Activated naive CD4-positive, alpha-beta T cell treated with anti-CD3 and anti-CD28 coated beads for 36 hours (primary cell): ENCODE measurements at regions of chr15 and their contacts with region 1.

Region 1: GRCh38 chr15:90151989-90152645 is 49.0 kb upstream of the SEMA4B start:
- DNase-seq: no peak
- H3K4me3 Mint-ChIP-seq: no peak overlapping the region
- H3K27ac Mint-ChIP-seq: no peak overlapping the region
- H3K4me1 Mint-ChIP-seq: no peaks in the 10 kb centered on the region
- H3K27me3 Mint-ChIP-seq: no peaks in the 10 kb centered on the region

Region 2: DNA sequence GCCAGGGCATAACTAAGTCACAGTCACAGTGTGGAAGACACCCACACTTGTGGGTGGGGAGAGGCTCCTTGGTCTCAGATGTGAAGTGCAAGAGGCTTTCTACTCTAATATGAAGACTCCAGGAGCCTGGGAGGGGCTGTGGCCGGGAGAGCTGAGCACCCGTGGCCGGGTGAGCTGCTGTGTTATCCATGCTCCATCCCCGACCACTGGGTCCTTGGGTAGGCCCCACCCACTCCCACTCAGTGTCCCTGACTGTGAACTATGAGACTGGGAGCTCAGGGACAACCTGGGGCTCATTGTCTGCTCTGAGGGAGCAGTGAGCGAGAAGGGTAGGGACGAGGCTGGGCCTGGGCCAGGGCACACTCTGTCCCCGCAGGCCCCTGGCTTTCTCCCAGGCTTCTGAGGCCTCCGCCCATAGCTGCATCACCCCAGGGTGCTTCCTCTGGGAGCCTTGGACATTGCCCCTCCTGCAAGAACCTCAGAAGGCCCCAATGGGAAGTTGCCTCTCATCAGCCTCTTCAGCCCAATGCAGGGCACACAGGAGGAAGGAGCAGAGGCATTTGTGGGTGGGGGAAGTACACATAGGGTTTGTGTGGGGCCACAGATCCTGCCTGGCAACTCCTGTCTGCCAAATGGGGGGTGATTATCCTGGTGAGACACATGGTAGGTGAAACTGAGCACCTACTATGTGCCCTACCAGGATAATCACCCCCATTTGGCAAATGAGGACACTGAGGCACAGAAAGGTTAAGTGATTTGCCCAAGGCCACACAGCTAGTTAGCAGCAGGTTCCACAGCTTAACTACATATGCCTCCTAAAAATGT is 339.9 kb before region 1 on chr15:
- CTCF ChIA-PET with region 1: no interaction called
- intact Hi-C with region 1: no loop called
- DNase-seq: no peak
- H3K4me3 Mint-ChIP-seq: no peak overlapping the region
- H3K27ac Mint-ChIP-seq: no peak overlapping the region
- H3K4me1 Mint-ChIP-seq: peaks cover 3% of the 10 kb centered on the region
- H3K27me3 Mint-ChIP-seq: peaks cover 33% of the 10 kb centered on the region

Region 3: DNA sequence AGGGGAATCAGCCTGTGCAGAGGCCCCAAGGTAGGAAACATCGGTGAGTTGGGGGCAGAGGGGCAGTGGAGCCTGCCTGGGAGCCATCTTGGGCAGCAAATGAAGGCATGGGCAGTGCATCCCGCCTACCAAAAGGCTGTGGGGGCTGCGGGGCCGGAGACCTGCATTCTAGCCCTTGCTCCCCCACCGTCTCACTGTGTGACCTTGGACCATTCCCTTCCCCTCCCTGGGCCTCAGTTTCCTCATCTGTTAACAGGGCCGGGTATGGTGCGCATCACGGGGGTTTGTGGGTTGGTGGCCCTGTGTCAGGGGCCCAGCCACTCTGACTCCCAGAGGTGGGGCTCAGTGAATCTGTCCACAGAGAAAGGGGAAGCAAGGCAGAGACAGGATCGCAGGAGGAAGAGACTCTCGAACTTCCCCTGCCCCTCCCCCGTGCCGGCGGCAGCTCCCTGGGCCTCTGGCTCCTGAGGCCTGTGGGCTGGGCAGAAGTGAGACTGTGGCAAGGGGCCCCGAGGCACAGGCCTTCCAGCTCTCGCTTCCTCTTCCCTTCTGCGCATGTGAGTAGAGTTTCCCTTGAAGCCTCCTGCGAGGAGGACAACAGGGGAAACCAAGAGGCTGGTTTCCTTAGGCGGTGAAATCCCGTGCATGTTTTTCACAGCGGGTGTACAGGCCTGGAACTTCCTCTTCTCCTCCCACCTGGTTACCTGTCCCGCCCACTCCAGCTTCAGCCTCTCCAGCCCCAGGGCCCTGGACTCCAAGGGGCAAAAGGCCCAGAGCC is 92.7 kb before region 1 on chr15:
- CTCF ChIA-PET with region 1: no interaction called
- intact Hi-C with region 1: no loop called
- DNase-seq: peak; percentile 94
- H3K4me3 Mint-ChIP-seq: peak overlapping the region; percentile 59
- H3K27ac Mint-ChIP-seq: peak overlapping the region; percentile 96
- H3K4me1 Mint-ChIP-seq: peaks cover 49% of the 10 kb centered on the region
- H3K27me3 Mint-ChIP-seq: no peaks in the 10 kb centered on the region

Region 4: DNA sequence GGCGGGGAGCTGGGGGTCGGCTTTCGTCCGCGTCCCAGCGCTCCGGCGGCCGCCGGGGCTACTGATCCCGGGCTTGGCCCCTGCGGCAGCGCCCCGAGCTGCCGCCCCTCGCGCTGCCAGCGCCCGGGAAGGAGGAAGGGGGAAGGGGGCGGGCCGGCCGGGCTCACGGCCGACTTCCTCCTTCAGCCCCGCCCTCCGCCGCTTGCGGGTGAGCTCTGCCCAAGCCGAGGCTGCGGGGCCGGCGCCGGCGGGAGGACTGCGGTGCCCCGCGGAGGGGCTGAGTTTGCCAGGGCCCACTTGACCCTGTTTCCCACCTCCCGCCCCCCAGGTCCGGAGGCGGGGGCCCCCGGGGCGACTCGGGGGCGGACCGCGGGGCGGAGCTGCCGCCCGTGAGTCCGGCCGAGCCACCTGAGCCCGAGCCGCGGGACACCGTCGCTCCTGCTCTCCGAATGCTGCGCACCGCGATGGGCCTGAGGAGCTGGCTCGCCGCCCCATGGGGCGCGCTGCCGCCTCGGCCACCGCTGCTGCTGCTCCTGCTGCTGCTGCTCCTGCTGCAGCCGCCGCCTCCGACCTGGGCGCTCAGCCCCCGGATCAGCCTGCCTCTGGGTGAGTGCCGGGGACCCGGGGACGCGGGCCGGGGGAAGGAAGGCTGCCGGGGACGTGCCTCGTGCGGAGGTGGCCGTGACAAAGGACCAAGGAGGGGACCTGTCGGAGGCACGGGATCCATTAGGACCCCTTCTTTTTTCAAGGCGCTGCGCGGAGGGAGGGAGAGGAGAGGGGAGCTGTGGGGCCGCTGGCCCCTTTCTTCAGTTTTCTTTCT is 49.2 kb after region 1 on chr15 and contains the start of gene SEMA4B:
- CTCF ChIA-PET with region 1: no interaction called
- intact Hi-C with region 1: no loop called
- DNase-seq: peak; percentile 72
- H3K4me3 Mint-ChIP-seq: peak within 1 kb of the TSS; percentile 77
- H3K27ac Mint-ChIP-seq: peak within 1 kb of the TSS; percentile 75
- H3K4me1 Mint-ChIP-seq: peaks cover 11% of the 10 kb centered on the region
- H3K27me3 Mint-ChIP-seq: peaks cover 2% of the 10 kb centered on the region
- total RNA-seq, gene SEMA4B: 6.8 to 8.6 TPM

Region 5: DNA sequence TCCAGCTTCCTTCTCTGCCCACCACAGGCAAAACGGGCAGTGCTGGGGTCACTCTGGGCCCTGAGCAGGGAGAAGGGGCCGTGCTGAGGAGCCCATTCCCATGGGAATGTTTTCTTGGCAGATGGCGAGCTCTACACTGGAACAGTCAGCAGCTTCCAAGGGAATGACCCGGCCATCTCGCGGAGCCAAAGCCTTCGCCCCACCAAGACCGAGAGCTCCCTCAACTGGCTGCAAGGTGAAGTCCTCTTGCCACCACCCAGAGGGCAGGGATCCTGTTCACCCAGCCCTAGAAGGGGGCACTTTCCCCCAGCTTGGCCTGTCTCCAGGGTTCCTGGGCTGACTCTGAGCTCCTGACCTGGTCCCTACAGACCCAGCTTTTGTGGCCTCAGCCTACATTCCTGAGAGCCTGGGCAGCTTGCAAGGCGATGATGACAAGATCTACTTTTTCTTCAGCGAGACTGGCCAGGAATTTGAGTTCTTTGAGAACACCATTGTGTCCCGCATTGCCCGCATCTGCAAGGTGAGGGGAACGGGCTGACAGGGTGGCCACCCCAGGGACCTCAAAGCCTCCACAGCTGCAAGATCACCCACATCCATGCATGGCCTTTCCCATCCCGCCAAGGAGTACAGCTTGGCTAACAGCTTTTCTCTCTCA is 69.3 kb after region 1 on chr15:
- CTCF ChIA-PET with region 1: interaction called, 18 read pairs
- intact Hi-C with region 1: no loop called
- DNase-seq: peak; percentile 58
- H3K4me3 Mint-ChIP-seq: no peak overlapping the region
- H3K27ac Mint-ChIP-seq: no peak overlapping the region
- H3K4me1 Mint-ChIP-seq: peaks cover 2% of the 10 kb centered on the region
- H3K27me3 Mint-ChIP-seq: no peaks in the 10 kb centered on the region

Region 6: GRCh38 chr15:90300988-90301706 is 149.0 kb after region 1 on chr15:
- CTCF ChIA-PET with region 1: no interaction called
- intact Hi-C with region 1: no loop called
- DNase-seq: peak; percentile 70
- H3K4me3 Mint-ChIP-seq: no peak overlapping the region
- H3K27ac Mint-ChIP-seq: no peak overlapping the region
- H3K4me1 Mint-ChIP-seq: peaks cover 15% of the 10 kb centered on the region
- H3K27me3 Mint-ChIP-seq: no peaks in the 10 kb centered on the region